GM12878 (cell line): ENCODE measurements at regions of chr3 and their contacts with region 1.

Region 1: GRCh38 chr3:115147329-115148141 is 447 bp upstream of the ZBTB20 start:
- DNase-seq: peak; percentile 99
- ATAC-seq: peak; percentile 90
- H3K4me3 ChIP-seq: peak overlapping the region; percentile 85
- H3K27ac ChIP-seq: peak overlapping the region; percentile 84
- H3K4me1 ChIP-seq: no peaks in the 10 kb centered on the region
- H3K27me3 ChIP-seq: no peaks in the 10 kb centered on the region
- CTCF ChIP-seq: no peak
- EP300 ChIP-seq: peak in 1 of 2 experiments; percentile 21; a peak in 1 of 4 replicates
- POLR2A ChIP-seq: peak; percentile 89
- RAD21 ChIP-seq: no peak

Region 2: GRCh38 chr3:115134648-115135347 is 12.7 kb before region 1 on chr3:
- CTCF ChIA-PET with region 1: interaction called, 3 read pairs
- POLR2A ChIA-PET with region 1: interaction called, 6 read pairs
- RAD21 ChIA-PET with region 1: interaction called, 3 read pairs
- SMC1A ChIA-PET with region 1: interaction called, 14 read pairs
- in situ Hi-C with region 1: no loop called
- intact Hi-C with region 1: no loop called
- DNase-seq: no peak
- ATAC-seq: no peak
- H3K4me3 ChIP-seq: no peak overlapping the region
- H3K27ac ChIP-seq: no peak overlapping the region
- H3K4me1 ChIP-seq: peaks cover 9% of the 10 kb centered on the region; the same call in 1 of the 2 replicates
- H3K27me3 ChIP-seq: no peaks in the 10 kb centered on the region
- CTCF ChIP-seq: no peak
- EP300 ChIP-seq: no peak
- POLR2A ChIP-seq: no peak
- RAD21 ChIP-seq: no peak